H1 (cell line): ENCODE measurements at regions of chr5 and their contacts with region 1.

Region 1: DNA sequence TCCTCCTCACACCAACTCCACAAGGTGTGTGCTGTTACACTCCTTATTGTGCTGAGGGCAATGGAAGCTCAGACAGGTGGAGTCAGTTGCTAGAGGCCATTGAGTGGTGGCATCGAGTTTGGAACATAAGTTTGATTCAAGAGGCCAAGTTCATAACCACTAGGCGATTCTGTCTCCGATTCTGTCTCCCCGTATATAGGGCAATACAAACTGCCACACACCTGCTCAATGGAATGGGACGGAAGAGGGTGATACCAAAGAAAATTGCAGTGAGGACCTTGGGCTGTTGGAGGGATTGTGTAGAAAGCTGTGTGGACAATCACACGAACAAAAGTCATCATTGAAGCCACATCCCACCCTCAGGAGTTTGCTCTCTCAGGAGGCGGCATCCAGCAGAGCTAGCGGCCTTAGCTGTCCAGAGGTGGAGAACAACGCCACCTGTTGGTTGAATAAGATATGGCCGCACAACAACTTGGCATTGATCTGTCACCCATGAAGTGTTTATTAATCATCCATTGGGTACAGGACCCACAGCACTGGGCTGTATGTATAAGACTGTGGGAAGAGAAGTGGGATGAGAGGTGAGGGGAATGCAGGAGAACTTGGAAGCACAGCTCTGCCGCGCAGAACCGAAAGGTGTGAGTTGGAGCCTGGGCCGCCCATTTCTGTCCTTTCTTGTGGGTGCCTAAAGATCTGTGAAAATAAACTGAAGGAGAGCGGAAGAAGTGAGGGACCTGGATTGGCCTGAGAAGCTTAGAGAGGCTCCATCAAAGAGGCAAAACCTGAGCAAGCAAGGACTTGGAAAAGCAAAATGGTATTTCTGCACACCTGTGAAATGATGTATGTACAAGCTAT is 16.1 kb upstream of the NEUROG1 start:
- DNase-seq: peak in 1 of 2 experiments; percentile 82
- H3K4me3 ChIP-seq: no peak overlapping the region
- H3K27ac ChIP-seq: no peak overlapping the region
- H3K4me1 ChIP-seq: no peaks in the 10 kb centered on the region; a peak in 2 of 7 replicates
- H3K27me3 ChIP-seq: peaks cover 41 to 50% (median 49%) of the 10 kb centered on the region in 4 experiments
- CTCF ChIP-seq: peak; percentile 64 to 87 (median 85)
- EP300 ChIP-seq: no peak
- POLR2A ChIP-seq: no peak
- RAD21 ChIP-seq: peak; percentile 89 to 91

Region 2: DNA sequence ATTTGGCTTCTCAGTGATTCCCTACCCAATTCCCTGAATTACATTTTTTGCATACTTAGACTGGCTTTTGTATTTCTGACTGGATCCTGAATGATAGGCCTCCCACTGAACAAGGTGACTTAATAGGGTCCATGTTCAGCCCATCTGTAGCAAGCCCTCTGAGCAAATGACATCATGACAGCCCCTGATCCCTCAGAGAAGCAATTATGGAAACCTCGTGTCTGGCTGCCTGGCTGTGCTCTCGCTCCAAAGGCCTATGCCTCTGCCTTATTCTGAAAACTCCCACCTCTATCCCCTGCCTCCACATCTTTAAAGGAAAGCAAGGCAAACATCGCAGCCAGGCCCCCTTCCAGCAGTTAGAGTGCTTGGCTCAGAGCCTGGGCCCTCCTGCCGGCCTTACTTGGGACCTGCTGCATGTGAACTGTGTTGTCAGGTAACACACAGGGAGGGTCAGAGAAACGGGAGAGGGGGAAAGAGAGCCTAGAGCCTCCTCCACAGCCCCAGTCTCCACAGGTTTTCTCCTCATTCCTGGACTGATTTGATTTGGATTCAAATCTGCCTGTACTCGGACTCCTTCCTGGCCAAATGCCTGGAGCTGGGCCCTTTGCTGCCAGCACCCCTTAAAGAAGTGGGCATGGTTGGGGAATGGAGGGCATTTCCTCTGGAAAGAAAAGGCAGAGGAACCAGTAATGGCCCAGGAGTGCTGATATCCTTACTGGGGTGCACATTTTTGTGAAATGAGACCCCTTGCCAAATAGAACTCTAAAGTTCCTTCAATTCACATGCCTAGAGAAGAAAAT is 108.5 kb before region 1 on chr5:
- CTCF ChIA-PET with region 1: interaction called, 10 read pairs
- POLR2A ChIA-PET with region 1: no interaction called
- DNase-seq: peak in 1 of 2 experiments; percentile 35
- H3K4me3 ChIP-seq: no peak overlapping the region
- H3K27ac ChIP-seq: no peak overlapping the region
- H3K4me1 ChIP-seq: no peaks in the 10 kb centered on the region; a peak in 1 of 7 replicates
- H3K27me3 ChIP-seq: peaks cover 0 to 3% (median 0%) of the 10 kb centered on the region in 4 experiments; a peak in 2 of 7 replicates
- CTCF ChIP-seq: no peak
- EP300 ChIP-seq: no peak
- POLR2A ChIP-seq: no peak
- RAD21 ChIP-seq: no peak

Region 3: GRCh38 chr5:135488727-135489465 is 62.9 kb before region 1 on chr5:
- CTCF ChIA-PET with region 1: interaction called, 94 read pairs
- POLR2A ChIA-PET with region 1: interaction called, 4 read pairs
- DNase-seq: peak; percentile 62 to 84
- H3K4me3 ChIP-seq: peak overlapping the region; percentile 32 to 56 (median 46); a peak in 7 of 8 replicates
- H3K27ac ChIP-seq: no peak overlapping the region
- H3K4me1 ChIP-seq: peaks cover 4 to 47% (median 27%) of the 10 kb centered on the region in 4 experiments
- H3K27me3 ChIP-seq: peaks cover 83 to 99% (median 96%) of the 10 kb centered on the region in 4 experiments
- CTCF ChIP-seq: no peak
- EP300 ChIP-seq: no peak
- POLR2A ChIP-seq: no peak
- RAD21 ChIP-seq: no peak; a peak in 1 of 4 replicates

Region 4: GRCh38 chr5:135535820-135536801 is 15.7 kb before region 1 on chr5 and contains the start of gene NEUROG1:
- CTCF ChIA-PET with region 1: interaction called, 77 read pairs
- POLR2A ChIA-PET with region 1: no interaction called
- DNase-seq: peak in 1 of 2 experiments; percentile 87
- H3K4me3 ChIP-seq: peak within 1 kb of the TSS; percentile 19 to 51 (median 28); a peak in 7 of 8 replicates
- H3K27ac ChIP-seq: no peak within 1 kb of the TSS
- H3K4me1 ChIP-seq: peaks cover 0 to 12% (median 11%) of the 10 kb centered on the region in 4 experiments; a peak in 6 of 7 replicates
- H3K27me3 ChIP-seq: peaks cover 96 to 100% (median 98%) of the 10 kb centered on the region in 4 experiments
- CTCF ChIP-seq: no peak
- EP300 ChIP-seq: peak in 1 of 2 experiments; percentile 18; a peak in 1 of 3 replicates
- POLR2A ChIP-seq: no peak
- RAD21 ChIP-seq: no peak
- total RNA-seq, gene NEUROG1: not detected in 2 replicates

Region 5: DNA sequence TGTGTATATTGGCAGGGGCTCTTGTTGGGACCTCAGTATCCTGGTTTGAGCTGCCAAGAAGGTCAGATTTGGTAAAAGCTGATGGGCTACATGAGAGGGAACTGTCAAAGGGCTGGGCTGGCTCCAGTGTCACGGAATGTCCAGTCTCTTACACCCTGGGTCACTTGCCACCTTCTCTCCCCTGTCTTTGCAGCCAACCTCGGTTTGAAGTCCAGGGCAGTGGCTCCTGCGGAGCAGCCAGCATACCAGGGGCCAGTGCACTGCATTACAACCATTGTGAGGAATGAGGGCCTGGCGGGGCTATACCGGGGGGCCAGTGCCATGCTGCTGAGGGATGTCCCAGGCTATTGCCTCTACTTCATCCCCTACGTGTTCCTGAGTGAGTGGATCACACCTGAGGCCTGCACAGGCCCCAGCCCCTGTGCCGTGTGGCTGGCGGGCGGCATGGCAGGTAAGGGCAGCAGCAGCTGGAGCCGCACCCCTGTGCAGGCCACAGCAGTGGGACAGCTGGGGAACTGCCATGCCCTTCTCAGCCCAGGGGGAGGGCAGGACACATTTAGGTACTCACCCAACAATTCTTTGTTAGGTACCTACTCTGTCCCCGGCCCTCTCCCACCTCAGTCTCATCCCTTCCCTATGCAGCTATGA is 319.6 kb after region 1 on chr5:
- CTCF ChIA-PET with region 1: interaction called, 17 read pairs
- POLR2A ChIA-PET with region 1: no interaction called
- DNase-seq: no peak
- H3K4me3 ChIP-seq: no peak overlapping the region
- H3K27ac ChIP-seq: no peak overlapping the region
- H3K4me1 ChIP-seq: no peaks in the 10 kb centered on the region
- H3K27me3 ChIP-seq: no peaks in the 10 kb centered on the region; a peak in 1 of 7 replicates
- CTCF ChIP-seq: no peak
- EP300 ChIP-seq: no peak
- POLR2A ChIP-seq: no peak
- RAD21 ChIP-seq: no peak